ENCODE measurements at regions of chr6 and their contacts with region 1.

Region 1: GRCh38 chr6:53492860-53493634 is 51.9 kb downstream of the GCLC start:
- DNase-seq: no peak
- H3K4me3 ChIP-seq: peak overlapping the region; percentile 24 to 53
- H3K27ac ChIP-seq: peak overlapping the region in 1 of 2 donors; percentile 36
- H3K4me1 ChIP-seq: no peaks in the 10 kb centered on the region
- H3K27me3 ChIP-seq: no peaks in the 10 kb centered on the region
- CTCF ChIP-seq: peak in 2 of 3 experiments; percentile 69 to 76

Region 2: GRCh38 chr6:53651764-53652401 is 158.8 kb after region 1 on chr6:
- intact Hi-C with region 1: loop called (anchors 2 kb)
- DNase-seq: peak; percentile 24 to 80
- H3K4me3 ChIP-seq: peak overlapping the region; percentile 71
- H3K27ac ChIP-seq: no peak overlapping the region
- H3K4me1 ChIP-seq: peaks cover 0 to 5% of the 10 kb centered on the region in 2 donors
- H3K27me3 ChIP-seq: no peaks in the 10 kb centered on the region
- CTCF ChIP-seq: peak; percentile 9 to 31 (median 26)

Region 3: GRCh38 chr6:53725791-53726431 is 232.9 kb after region 1 on chr6:
- intact Hi-C with region 1: loop called (anchors 2 kb)
- DNase-seq: peak in 1 of 2 donors; percentile 84
- H3K4me3 ChIP-seq: no peak overlapping the region
- H3K27ac ChIP-seq: no peak overlapping the region
- H3K4me1 ChIP-seq: no peaks in the 10 kb centered on the region
- H3K27me3 ChIP-seq: no peaks in the 10 kb centered on the region
- CTCF ChIP-seq: peak; percentile 76 to 97 (median 95)